ENCODE measurements at regions of chr16 and their contacts with region 1.

Region 1: DNA sequence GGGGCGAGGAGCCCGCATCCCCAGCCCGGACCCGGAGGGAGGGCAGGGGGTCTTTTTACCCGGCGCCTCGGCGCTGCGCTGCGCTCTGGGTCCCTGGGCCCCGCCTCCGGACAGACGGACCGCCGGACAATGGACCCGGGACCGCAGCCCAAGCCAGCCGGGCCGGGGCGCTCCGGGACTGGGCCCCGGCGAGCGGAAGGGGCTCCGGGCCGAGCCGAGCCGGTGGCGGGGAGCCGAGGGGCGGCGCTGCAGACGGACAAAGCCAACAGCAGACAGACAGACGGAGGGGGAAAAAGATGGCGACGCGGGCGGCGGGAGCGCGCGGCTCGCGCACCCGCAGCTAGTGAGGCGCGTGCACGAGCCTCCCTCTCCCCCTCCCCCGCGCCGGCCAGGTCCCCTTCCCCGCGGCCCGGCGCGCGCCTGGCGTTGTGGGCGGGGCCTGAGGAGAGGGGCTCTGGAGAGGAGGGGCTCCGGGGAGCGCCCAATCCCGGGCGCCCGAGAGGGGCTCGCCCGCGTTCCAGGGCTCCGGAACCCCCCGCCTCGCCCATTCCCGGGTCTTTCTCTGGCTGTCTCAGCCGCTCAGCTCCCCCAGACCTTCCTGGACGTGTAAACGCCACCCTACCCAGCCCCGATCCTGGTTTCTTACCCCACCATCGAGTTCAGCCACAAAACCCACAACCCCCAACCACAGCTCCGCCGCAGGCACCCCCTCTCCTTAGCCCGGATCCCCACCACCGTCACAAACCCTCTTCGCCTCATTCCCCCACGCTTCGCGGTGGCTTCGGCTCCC is at the start of gene ZNF821:
- DNase-seq: peak; percentile 88 to 98 (median 96)
- ATAC-seq: peak; percentile 80
- H3K4me3 ChIP-seq: peak within 1 kb of the TSS; percentile 95
- H3K27ac ChIP-seq: peak within 1 kb of the TSS; percentile 80
- H3K4me1 ChIP-seq: peaks cover 13 to 26% of the 10 kb centered on the region in 2 experiments; a peak in 4 of 5 replicates
- H3K27me3 ChIP-seq: no peaks in the 10 kb centered on the region
- CTCF ChIP-seq: peak in 1 of 3 experiments; percentile 55; a peak in 3 of 6 replicates
- EP300 ChIP-seq: no peak
- POLR2A ChIP-seq: peak; percentile 63
- RAD21 ChIP-seq: peak; percentile 25 to 54
- polyA plus RNA-seq, gene ZNF821: 0.38 to 0.51 TPM

Region 2: DNA sequence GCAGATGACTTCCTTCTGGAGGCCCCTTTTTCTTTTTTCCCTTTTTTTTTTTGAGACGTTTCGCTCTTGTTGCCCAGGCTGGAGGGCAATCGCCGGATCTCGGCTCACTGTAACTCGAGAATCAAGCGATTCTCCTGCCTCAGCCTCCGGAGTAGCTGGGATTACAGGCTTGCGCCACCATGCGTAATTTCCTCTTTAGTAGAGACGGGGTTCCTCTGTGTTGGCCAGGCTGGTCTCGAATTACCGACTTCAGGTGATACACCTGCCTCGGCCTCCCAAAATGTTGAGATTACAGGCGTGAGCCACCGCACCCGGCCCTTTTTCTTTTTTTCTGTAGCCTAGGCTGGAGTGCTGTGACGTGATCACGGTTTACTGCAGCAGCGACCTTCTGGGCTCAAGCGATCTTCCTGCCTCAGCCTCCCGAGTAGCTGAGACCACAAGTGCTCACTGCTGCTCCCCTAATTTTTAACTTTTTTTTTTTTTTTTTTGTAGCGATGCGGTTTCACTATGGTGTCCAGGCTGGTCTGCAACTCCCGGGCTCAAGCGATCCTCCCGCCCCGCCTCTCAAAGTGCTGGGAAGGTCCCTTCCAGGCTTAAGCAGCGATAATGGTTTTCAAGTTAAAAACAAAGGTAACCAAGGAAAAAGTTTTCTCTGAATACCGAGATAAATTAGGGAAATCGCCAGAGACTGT is 10.3 kb after region 1 on chr16:
- CTCF ChIA-PET with region 1: no interaction called
- POLR2A ChIA-PET with region 1: interaction called, 20 read pairs
- in situ Hi-C with region 1: no loop called
- intact Hi-C with region 1: no loop called
- DNase-seq: peak in 1 of 4 experiments; percentile 73
- ATAC-seq: peak; percentile 38
- H3K4me3 ChIP-seq: peak overlapping the region; percentile 92
- H3K27ac ChIP-seq: peak overlapping the region; percentile 88
- H3K4me1 ChIP-seq: peaks cover 7 to 25% of the 10 kb centered on the region in 2 experiments; a peak in 4 of 5 replicates
- H3K27me3 ChIP-seq: no peaks in the 10 kb centered on the region
- CTCF ChIP-seq: peak in 2 of 3 experiments; percentile 12 to 34; a peak in 2 of 6 replicates
- EP300 ChIP-seq: no peak
- POLR2A ChIP-seq: no peak
- RAD21 ChIP-seq: peak in 1 of 2 experiments; percentile 42; a peak in 2 of 4 replicates

Measured in K562 (cell line).